ENCODE measurements at regions of chr21 and their contacts with region 1.

Region 1: DNA sequence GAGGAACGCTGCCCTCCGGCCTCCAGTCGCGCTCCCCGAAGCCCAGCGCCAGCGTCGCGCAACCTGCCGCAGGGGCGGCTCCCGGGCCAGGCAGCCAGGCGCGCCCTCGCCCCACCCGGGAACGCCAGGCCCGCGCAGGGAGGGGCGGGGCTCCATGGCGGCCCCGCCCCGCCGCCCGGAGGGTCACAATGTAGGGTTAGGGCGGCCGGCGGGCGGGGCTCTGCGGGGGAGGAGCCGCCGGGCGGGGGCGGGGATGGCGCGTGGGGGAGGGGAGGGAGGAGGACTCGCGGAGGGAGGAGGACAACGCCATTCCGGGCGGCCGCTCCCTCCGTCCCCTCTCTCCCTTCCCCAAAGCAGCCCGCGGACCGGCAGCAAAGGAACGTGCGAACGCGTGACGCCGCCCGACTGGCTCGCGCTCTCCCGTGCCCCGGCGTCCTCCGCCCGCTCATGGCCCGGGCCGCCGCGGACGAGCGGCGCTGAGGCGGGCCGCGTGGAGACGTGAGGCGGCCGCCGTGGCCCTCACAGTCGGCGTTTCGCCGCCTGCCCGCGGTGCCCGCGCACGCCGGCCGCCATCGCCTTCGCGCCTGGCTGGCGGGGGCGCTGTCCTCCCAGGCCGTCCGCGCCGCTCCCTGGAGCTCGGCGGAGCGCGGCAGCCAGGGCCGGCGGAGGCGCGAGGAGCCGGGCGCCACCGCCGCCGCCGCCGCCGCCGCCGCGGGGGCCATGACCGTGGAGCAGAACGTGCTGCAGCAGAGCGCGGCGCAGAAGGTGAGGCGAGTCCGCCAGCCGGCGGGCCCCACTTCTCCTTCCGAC is at the start of gene USP25:
- DNase-seq: peak; percentile 74 to 89 (median 80)
- H3K4me3 ChIP-seq: peak within 1 kb of the TSS; percentile 59 to 95 (median 81)
- H3K27ac ChIP-seq: peak within 1 kb of the TSS; percentile 76 to 97 (median 92)
- H3K27me3 ChIP-seq: no peaks in the 10 kb centered on the region
- CTCF ChIP-seq: peak in 23 of 56 donors; percentile 4 to 67 (median 32)
- total RNA-seq, gene USP25: 29.2 to 77.2 (median 56.4) TPM

Region 2: GRCh38 chr21:14382835-14383594 is 1346.9 kb before region 1 on chr21 and contains the start of gene HSPA13:
- intact Hi-C with region 1: loop called in 1 of 2 experiments (anchors 5 kb)
- DNase-seq: peak; percentile 100
- H3K4me3 ChIP-seq: peak within 1 kb of the TSS; percentile 67 to 99 (median 87)
- H3K27ac ChIP-seq: peak within 1 kb of the TSS; percentile 63 to 98 (median 95)
- H3K27me3 ChIP-seq: no peaks in the 10 kb centered on the region
- CTCF ChIP-seq: peak in 29 of 56 donors; percentile 7 to 50 (median 27)
- total RNA-seq, gene HSPA13: 27.8 to 86.2 (median 52.1) TPM

Region 3: GRCh38 chr21:15804247-15805005 is 74.5 kb after region 1 on chr21:
- intact Hi-C with region 1: loop called in 1 of 2 experiments (anchors 5 kb)
- DNase-seq: peak in 3 of 10 donors; percentile 33 to 67 (median 52)
- H3K4me3 ChIP-seq: no peak overlapping the region
- H3K27ac ChIP-seq: peak overlapping the region in 3 of 59 donors; percentile 11 to 15 (median 12)
- H3K27me3 ChIP-seq: no peaks in the 10 kb centered on the region
- CTCF ChIP-seq: peak in 2 of 56 donors; percentile 11 to 17

Measured in dorsolateral prefrontal cortex (tissue), 120 donors.